Mammary epithelial cell (primary cell): ENCODE measurements at regions of chr16 and their contacts with region 1.

Region 1: GRCh38 chr16:74623214-74623842 is 16.4 kb upstream of the GLG1 start:
- DNase-seq: peak; percentile 27
- H3K4me3 ChIP-seq: no peak overlapping the region
- H3K27ac ChIP-seq: no peak overlapping the region
- H3K4me1 ChIP-seq: no peaks in the 10 kb centered on the region
- H3K27me3 ChIP-seq: no peaks in the 10 kb centered on the region
- CTCF ChIP-seq: peak; percentile 59 to 63

Region 2: DNA sequence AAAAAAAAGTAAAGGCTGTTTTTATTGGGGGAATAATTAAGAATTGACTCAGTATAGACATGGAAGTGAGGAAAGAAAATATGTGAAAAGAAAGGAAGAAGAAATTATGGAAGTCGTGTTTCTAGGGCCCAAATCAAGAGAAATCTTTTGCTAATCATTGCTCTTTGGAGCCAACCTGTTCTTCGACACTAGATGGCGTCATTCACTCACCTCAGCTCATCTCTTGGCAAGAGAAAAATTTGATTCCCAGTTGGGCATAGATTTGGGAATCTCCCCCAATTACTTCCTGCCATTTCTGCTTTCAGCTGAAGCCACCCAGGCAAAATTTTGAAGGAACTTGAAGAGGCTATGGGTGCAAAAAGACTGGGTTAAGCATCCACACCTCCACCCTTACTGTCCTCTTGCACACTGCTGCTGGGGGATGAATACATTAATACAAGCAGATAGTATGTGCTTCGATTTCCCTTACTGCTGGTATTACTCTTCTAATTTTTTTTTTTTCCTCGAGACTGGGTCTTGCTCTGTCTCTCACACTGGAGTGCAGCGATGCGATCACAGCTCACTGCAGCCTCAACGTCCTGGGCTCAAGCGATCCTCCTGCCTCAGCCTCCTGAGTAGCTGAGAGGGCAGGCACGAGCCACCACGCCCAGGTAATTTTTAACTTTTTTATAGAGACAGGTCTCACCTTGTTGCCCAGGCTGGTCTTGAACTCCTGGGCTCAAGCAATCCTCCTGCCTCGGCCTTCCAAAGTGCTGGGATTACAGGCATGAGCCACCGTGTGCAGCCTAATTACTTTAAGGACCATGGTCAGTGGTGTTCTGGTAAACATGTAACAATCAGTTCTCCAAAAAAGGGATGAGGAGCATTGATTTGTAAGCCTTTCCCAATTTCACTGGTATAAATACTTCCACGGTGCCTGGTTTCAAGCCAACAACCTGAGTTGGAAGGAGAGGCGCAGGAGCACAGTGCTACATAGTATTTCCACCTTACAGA is 313.2 kb before region 1 on chr16:
- CTCF ChIA-PET with region 1: no interaction called
- dilution Hi-C with region 1: no loop called
- in situ Hi-C with region 1: loop called in 1 of 2 experiments (anchors 10 kb)
- intact Hi-C with region 1: loop called (anchors 1 kb)
- DNase-seq: peak; percentile 34
- H3K4me3 ChIP-seq: no peak overlapping the region
- H3K27ac ChIP-seq: no peak overlapping the region
- H3K4me1 ChIP-seq: no peaks in the 10 kb centered on the region
- H3K27me3 ChIP-seq: no peaks in the 10 kb centered on the region
- CTCF ChIP-seq: peak; percentile 73 to 79

Region 3: GRCh38 chr16:74372953-74373846 is 250.1 kb before region 1 on chr16:
- CTCF ChIA-PET with region 1: no interaction called
- dilution Hi-C with region 1: no loop called
- in situ Hi-C with region 1: no loop called
- intact Hi-C with region 1: loop called (anchors 10 kb)
- DNase-seq: no peak
- H3K4me3 ChIP-seq: no peak overlapping the region
- H3K27ac ChIP-seq: no peak overlapping the region
- H3K4me1 ChIP-seq: no peaks in the 10 kb centered on the region
- H3K27me3 ChIP-seq: no peaks in the 10 kb centered on the region
- CTCF ChIP-seq: no peak

Region 4: GRCh38 chr16:74431516-74431915 is 191.8 kb before region 1 on chr16:
- CTCF ChIA-PET with region 1: no interaction called
- dilution Hi-C with region 1: no loop called
- in situ Hi-C with region 1: no loop called
- intact Hi-C with region 1: loop called (anchors 1 kb)
- DNase-seq: no peak
- H3K4me3 ChIP-seq: no peak overlapping the region
- H3K27ac ChIP-seq: no peak overlapping the region
- H3K4me1 ChIP-seq: peaks cover 8% of the 10 kb centered on the region
- H3K27me3 ChIP-seq: no peaks in the 10 kb centered on the region
- CTCF ChIP-seq: no peak

Region 5: DNA sequence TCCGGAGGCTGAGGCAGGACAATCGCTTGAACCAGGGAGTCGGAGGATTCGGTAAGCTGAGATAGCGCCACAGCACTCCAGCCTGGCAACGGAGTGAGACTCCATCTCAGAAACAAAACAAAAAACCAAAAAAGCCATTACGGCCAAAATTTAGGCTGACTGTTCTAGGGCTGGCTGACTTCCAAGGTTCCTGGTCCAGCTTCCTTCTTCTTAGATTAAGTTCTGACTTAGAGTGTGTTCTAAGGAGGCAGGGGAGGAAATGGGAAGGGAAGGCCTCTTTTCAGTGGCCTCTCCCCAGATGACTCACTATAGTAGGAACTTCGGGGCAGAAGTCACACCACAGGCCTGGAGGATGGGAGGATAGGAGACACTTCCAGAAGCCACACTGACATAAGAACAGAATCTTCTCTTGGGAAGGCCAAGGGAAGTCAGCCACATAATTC is 174.3 kb before region 1 on chr16:
- CTCF ChIA-PET with region 1: no interaction called
- dilution Hi-C with region 1: no loop called
- in situ Hi-C with region 1: no loop called
- intact Hi-C with region 1: loop called (anchors 5 kb)
- DNase-seq: peak; percentile 81
- H3K4me3 ChIP-seq: no peak overlapping the region
- H3K27ac ChIP-seq: peak overlapping the region; percentile 82
- H3K4me1 ChIP-seq: peaks cover 36% of the 10 kb centered on the region
- H3K27me3 ChIP-seq: no peaks in the 10 kb centered on the region
- CTCF ChIP-seq: no peak

Region 6: DNA sequence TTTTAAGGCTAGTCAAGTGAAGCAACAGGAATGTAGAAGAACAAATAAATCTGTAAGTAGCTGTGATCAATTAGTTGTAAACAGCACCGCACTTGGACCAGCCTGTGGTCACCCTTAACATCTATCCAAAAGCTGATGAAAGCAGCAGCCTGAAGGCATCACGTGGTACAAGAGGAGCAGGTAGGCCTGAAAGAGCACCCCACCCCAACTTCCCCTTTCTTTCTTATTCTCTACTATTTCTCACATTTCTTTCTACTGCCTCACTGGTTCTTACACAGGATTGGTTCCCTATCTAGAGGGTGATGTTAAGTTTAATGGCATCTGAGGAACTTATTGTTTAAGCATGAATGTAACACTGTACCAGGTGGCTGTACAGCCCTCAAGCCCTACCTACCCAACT is 159.4 kb before region 1 on chr16:
- CTCF ChIA-PET with region 1: no interaction called
- dilution Hi-C with region 1: no loop called
- in situ Hi-C with region 1: no loop called
- intact Hi-C with region 1: loop called (anchors 5 kb)
- DNase-seq: no peak
- H3K4me3 ChIP-seq: no peak overlapping the region
- H3K27ac ChIP-seq: no peak overlapping the region
- H3K4me1 ChIP-seq: peaks cover 22% of the 10 kb centered on the region
- H3K27me3 ChIP-seq: no peaks in the 10 kb centered on the region
- CTCF ChIP-seq: no peak

Region 7: DNA sequence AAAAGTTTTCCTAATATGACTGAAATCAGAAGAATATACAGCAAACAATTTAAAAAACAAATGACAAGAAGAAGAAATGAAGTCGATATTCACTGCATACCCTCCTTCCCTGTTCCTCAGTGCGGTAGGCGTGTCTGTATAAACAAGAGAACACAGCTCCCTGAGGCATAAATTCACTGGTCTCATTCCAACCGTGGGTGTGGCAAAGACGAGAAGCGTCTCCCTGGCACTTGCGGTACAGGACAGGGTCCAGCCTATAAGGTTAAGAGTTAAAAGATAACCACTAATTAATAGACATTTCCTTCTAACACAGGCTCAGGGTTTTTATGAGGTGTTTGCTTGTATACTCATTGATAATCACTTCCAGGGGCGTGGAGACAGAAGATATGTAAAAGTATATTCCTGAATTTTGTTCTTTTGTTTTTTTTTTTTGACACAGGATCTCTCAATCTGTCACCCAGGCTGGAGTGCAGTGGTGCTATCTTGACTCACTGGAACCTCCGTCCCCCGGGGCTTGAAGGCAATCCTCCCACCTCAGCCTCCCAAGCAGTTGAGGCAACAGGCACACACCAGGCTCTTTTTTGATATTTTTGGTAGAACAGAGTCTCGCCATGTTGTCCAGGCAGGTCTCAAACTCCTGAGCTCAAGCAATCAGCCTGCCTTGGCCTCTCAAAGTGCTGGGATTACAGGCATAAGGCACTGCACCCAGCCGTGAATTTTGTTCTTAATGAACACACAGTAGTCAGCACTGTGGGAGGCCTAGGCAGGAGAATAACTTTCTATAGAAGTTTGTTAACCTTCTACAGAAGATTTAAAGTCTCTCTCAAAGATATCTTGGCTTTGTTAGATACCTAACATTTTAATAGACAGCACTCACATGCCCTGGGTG is 142.9 kb before region 1 on chr16:
- CTCF ChIA-PET with region 1: no interaction called
- dilution Hi-C with region 1: no loop called
- in situ Hi-C with region 1: loop called in 1 of 2 experiments (anchors 25 kb)
- intact Hi-C with region 1: loop called (anchors 1 kb)
- DNase-seq: peak; percentile 72
- H3K4me3 ChIP-seq: no peak overlapping the region
- H3K27ac ChIP-seq: peak overlapping the region; percentile 5
- H3K4me1 ChIP-seq: peaks cover 19% of the 10 kb centered on the region
- H3K27me3 ChIP-seq: no peaks in the 10 kb centered on the region
- CTCF ChIP-seq: no peak

Region 8: GRCh38 chr16:74521691-74522090 is 101.6 kb before region 1 on chr16:
- CTCF ChIA-PET with region 1: no interaction called
- dilution Hi-C with region 1: no loop called
- in situ Hi-C with region 1: no loop called
- intact Hi-C with region 1: no loop called
- DNase-seq: no peak
- H3K4me3 ChIP-seq: no peak overlapping the region
- H3K27ac ChIP-seq: no peak overlapping the region
- H3K4me1 ChIP-seq: no peaks in the 10 kb centered on the region
- H3K27me3 ChIP-seq: no peaks in the 10 kb centered on the region
- CTCF ChIP-seq: no peak